Endothelial cell of umbilical vein (primary cell): ENCODE measurements at regions of chrX and their contacts with region 1.

Region 1: GRCh38 chrX:25020905-25021449 is 5.2 kb upstream of the ARX start:
- DNase-seq: no peak
- H3K4me3 ChIP-seq: no peak overlapping the region
- H3K27ac ChIP-seq: no peak overlapping the region
- H3K4me1 ChIP-seq: peaks cover 2% of the 10 kb centered on the region
- H3K27me3 ChIP-seq: peaks cover 74 to 92% of the 10 kb centered on the region in 2 experiments
- CTCF ChIP-seq: peak; percentile 51 to 76
- POLR2A ChIP-seq: no peak

Region 2: DNA sequence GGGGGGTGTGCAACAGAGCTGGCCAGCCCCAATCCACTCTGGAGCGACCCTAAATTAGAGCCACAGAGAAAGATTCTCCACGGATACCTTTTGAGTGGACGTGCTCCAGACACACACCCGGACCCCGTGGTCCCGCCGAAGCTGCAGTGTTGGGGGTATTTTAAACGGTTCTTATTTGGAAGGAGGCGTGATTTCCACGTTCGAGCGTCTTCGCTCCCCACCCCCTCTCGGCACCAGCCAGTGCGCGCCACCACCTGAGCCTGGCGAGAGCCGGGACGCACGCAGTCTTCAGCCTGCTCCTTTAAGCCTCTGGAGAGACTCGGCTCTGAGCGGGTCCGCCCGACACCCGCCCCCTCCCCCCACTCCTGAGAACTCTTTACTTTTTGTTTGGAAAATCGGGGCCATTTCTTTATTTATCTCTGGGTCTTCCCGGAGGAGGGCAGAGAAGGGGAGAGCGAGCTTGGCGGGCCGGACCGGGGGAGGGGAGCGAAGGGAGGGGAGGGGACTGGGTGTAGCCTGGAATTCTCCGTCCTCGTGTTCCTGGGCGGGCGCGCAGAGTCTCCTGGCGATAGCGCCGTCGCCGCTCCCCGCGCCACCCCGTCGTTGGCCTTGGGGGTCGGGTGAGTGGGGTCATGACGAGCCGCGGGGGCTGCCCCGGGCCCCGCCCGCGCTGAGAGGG is 1687.0 kb before region 1 on chrX:
- CTCF ChIA-PET with region 1: no interaction called
- POLR2A ChIA-PET with region 1: no interaction called
- dilution Hi-C with region 1: no loop called
- intact Hi-C with region 1: no loop called
- DNase-seq: no peak
- H3K4me3 ChIP-seq: peak overlapping the region in 1 of 3 experiments; percentile 15
- H3K27ac ChIP-seq: no peak overlapping the region
- H3K4me1 ChIP-seq: no peaks in the 10 kb centered on the region
- H3K27me3 ChIP-seq: peaks cover 39 to 51% of the 10 kb centered on the region in 2 experiments
- CTCF ChIP-seq: no peak
- POLR2A ChIP-seq: no peak

Region 3: GRCh38 chrX:24748202-24748843 is 272.7 kb before region 1 on chrX:
- CTCF ChIA-PET with region 1: interaction called, 11 read pairs
- POLR2A ChIA-PET with region 1: no interaction called
- dilution Hi-C with region 1: no loop called
- intact Hi-C with region 1: loop called (anchors 1 kb)
- DNase-seq: no peak
- H3K4me3 ChIP-seq: no peak overlapping the region
- H3K27ac ChIP-seq: no peak overlapping the region
- H3K4me1 ChIP-seq: no peaks in the 10 kb centered on the region
- H3K27me3 ChIP-seq: no peaks in the 10 kb centered on the region
- CTCF ChIP-seq: no peak
- POLR2A ChIP-seq: no peak